ENCODE measurements at regions of chr1 and their contacts with region 1.

Region 1: DNA sequence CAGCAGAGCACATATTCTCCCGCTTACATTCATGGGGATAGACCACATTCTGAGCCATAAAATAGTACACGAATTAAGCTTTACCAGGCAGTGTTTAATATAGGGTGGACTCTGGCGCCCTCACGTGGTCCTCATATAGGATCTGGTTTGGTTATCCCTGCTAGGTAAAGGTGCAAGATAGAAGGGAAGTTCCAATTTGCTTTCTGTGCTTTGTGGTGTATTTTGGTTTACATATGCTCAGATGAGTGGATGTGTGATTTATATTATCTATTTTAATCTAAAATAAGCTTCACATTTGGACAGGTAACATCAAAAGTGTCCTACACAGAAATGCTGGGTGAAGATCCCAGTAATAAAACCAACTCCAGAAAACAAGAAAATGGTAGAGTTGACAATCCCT is 3.6 kb downstream of the CR1 start:
- DNase-seq: peak; percentile 59
- ATAC-seq: peak; percentile 93
- H3K4me3 ChIP-seq: no peak overlapping the region
- H3K27ac ChIP-seq: no peak overlapping the region
- H3K4me1 ChIP-seq: no peaks in the 10 kb centered on the region
- H3K27me3 ChIP-seq: peaks cover 24% of the 10 kb centered on the region
- CTCF ChIP-seq: peak; percentile 74
- POLR2A ChIP-seq: no peak
- RAD21 ChIP-seq: peak; percentile 81

Region 2: GRCh38 chr1:207050768-207051614 is 448.6 kb before region 1 on chr1 and contains the start of gene YOD1:
- CTCF ChIA-PET with region 1: no interaction called
- POLR2A ChIA-PET with region 1: no interaction called
- dilution Hi-C with region 1: no loop called
- in situ Hi-C with region 1: no loop called
- intact Hi-C with region 1: loop called (anchors 1 kb)
- DNase-seq: peak; percentile 88
- ATAC-seq: peak; percentile 75
- H3K4me3 ChIP-seq: peak within 1 kb of the TSS; percentile 97
- H3K27ac ChIP-seq: peak within 1 kb of the TSS; percentile 78
- H3K4me1 ChIP-seq: peaks cover 4% of the 10 kb centered on the region; the same call in 1 of the 2 replicates
- H3K27me3 ChIP-seq: peaks cover 7% of the 10 kb centered on the region
- CTCF ChIP-seq: no peak
- POLR2A ChIP-seq: peak; percentile 81; the same call in 1 of the 2 replicates
- RAD21 ChIP-seq: no peak
- total RNA-seq, gene YOD1: 5.4 and 10.3 TPM in 2 replicates

Region 3: GRCh38 chr1:207268337-207268736 is 231.2 kb before region 1 on chr1:
- CTCF ChIA-PET with region 1: no interaction called
- POLR2A ChIA-PET with region 1: no interaction called
- dilution Hi-C with region 1: no loop called
- in situ Hi-C with region 1: no loop called
- intact Hi-C with region 1: no loop called
- DNase-seq: no peak
- ATAC-seq: peak; percentile 54
- H3K4me3 ChIP-seq: no peak overlapping the region
- H3K27ac ChIP-seq: no peak overlapping the region
- H3K4me1 ChIP-seq: no peaks in the 10 kb centered on the region
- H3K27me3 ChIP-seq: peaks cover 2% of the 10 kb centered on the region; the same call in 1 of the 2 replicates
- CTCF ChIP-seq: no peak
- POLR2A ChIP-seq: no peak
- RAD21 ChIP-seq: no peak

Measured in IMR-90 (cell line).